Activated CD4-positive, alpha-beta memory T cell treated with anti-CD3 and anti-CD28 coated beads, Interleukin-2, amount 10 ng/mL, durations not matched to agents 7 days and 5 days (primary cell): ENCODE measurements at regions of chr2 and their contacts with region 1.

Region 1: GRCh38 chr2:73085691-73086360 is 14.3 kb upstream of the SFXN5 start:
- DNase-seq: peak; percentile 84
- H3K4me3 Mint-ChIP-seq: no peak overlapping the region
- H3K27ac Mint-ChIP-seq: no peak overlapping the region
- H3K4me1 Mint-ChIP-seq: peaks cover 4% of the 10 kb centered on the region
- H3K27me3 Mint-ChIP-seq: no peaks in the 10 kb centered on the region

Region 2: DNA sequence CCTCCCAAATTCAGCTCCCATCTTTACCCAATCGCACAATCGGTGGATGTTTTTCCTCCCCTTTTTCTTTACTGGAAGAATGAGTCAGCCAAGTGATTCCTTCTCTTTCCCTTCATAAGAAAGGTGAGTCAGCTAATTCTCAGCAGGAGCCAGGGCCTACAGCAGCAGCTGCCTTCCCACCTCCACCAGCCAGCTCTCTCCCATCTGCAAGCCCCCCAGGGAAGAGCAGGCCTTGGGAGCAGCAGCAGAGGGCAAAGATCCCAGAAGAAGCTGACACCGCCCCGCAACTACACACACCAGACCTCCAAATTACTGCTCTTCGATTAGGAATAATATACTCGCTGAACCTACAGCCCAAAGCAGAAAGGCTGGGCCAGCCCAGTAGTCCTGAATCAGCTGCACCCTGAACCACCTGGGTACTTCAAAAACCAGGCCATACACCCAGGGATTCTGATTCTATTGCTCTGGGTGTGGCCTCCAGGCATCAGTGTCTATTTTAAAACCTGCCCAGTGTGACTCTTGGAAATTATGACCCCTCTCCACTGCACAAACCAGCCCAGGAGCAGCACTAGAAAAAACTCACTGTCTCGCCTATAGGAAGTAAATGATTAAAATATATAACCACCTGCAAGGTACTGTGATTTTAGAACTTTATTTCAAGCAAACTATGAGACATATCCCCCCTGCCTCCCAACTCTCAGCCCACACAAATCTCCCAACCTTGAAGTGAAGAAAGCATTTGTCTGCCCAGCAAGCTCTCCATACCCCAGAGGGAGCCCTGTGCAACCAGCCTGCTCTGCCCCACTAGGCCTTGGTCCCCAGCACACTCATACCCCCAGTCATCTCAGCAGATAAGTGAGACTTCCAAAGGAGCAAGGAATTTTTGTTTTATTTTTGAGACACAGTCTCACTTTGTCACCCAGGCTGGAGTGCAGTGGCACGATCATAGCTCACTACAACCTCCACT is 21.6 kb before region 1 on chr2:
- CTCF ChIA-PET with region 1: no interaction called
- POLR2A ChIA-PET with region 1: no interaction called
- DNase-seq: no peak
- H3K4me3 Mint-ChIP-seq: no peak overlapping the region
- H3K27ac Mint-ChIP-seq: no peak overlapping the region
- H3K4me1 Mint-ChIP-seq: peaks cover 11% of the 10 kb centered on the region
- H3K27me3 Mint-ChIP-seq: no peaks in the 10 kb centered on the region

Region 3: DNA sequence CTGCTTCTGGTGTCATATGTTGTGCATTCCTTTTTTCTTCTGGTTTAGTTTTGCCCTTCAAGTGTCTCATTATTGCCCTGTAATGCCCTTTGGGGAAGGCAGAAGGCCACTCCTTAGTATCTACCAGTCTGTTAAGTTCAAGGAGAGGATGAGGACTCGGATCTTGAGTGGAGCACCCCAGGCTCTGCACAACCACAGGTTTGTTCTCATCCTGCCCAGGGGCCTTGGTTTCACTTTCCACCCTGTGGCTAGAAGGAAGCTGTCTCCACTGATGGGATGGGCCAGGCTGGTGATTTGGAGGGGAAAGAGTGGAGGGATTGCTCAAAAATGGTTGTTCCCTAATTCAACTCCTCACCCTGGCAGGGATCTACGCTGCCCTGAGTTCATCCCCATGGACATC is 57.1 kb after region 1 on chr2:
- CTCF ChIA-PET with region 1: no interaction called
- POLR2A ChIA-PET with region 1: no interaction called
- DNase-seq: peak; percentile 20
- H3K4me3 Mint-ChIP-seq: no peak overlapping the region
- H3K27ac Mint-ChIP-seq: no peak overlapping the region
- H3K4me1 Mint-ChIP-seq: peaks cover 4% of the 10 kb centered on the region
- H3K27me3 Mint-ChIP-seq: peaks cover 23% of the 10 kb centered on the region

Region 4: GRCh38 chr2:73156539-73157124 is 70.8 kb after region 1 on chr2:
- CTCF ChIA-PET with region 1: interaction called, 16 read pairs
- POLR2A ChIA-PET with region 1: interaction called, 3 read pairs
- DNase-seq: peak; percentile 52
- H3K4me3 Mint-ChIP-seq: no peak overlapping the region
- H3K27ac Mint-ChIP-seq: no peak overlapping the region
- H3K4me1 Mint-ChIP-seq: no peaks in the 10 kb centered on the region
- H3K27me3 Mint-ChIP-seq: peaks cover 31% of the 10 kb centered on the region

Region 5: GRCh38 chr2:73212448-73213176 is 126.8 kb after region 1 on chr2:
- CTCF ChIA-PET with region 1: interaction called, 17 read pairs
- POLR2A ChIA-PET with region 1: no interaction called
- DNase-seq: peak; percentile 78
- H3K4me3 Mint-ChIP-seq: no peak overlapping the region
- H3K27ac Mint-ChIP-seq: no peak overlapping the region
- H3K4me1 Mint-ChIP-seq: peaks cover 31% of the 10 kb centered on the region
- H3K27me3 Mint-ChIP-seq: peaks cover 6% of the 10 kb centered on the region